ENCODE measurements at regions of chr14 and their contacts with region 1.

Region 1: DNA sequence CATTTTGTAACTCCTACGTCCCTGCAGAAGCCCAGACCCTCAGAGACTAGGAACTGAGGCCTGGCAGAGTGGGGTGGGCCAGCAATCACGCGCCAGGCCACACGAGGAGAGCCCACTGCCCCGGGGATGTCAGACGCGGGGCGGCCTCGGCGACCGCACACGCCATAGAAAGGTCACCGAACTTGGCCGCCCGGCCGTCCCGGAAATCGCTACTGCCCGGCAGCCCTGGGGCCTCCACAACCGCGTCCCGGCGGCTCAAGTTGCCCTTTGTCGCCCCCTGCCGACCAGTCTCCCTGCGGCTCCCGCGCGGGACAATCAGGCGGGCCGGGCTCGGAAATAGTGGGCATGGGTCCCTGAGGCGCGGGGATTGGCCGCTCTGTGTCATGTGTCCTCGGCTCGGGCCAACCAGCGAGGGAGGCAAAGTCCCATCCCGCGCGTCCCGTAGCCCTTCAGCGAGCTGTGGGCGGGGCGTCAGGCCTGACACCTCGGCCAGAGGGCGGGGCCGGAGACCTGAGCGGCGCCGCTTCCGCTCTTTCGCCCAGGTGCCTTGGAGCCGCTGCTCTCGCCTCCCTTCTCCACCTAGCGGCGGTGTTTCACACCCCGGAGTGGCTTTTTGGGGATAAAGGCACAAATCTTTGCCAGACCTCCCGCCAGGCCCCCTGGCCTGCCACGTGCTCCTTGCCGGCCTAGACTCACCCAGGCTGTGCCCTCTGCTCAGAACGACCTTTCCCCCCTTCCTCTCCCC is 33.4 kb upstream of the DEGS2 start:
- DNase-seq: peak; percentile 98 to 100 (median 99)
- ATAC-seq: peak; percentile 99
- H3K4me3 ChIP-seq: peak overlapping the region; percentile 56
- H3K4me3 Mint-ChIP-seq: peak overlapping the region; percentile 25 to 80 (median 60)
- H3K27ac ChIP-seq: peak overlapping the region; percentile 74
- H3K27ac Mint-ChIP-seq: peak overlapping the region; percentile 84 to 95 (median 93)
- H3K4me1 ChIP-seq: peaks cover 6 to 13% of the 10 kb centered on the region in 2 donors
- H3K4me1 Mint-ChIP-seq: peaks cover 5 to 18% (median 15%) of the 10 kb centered on the region in 7 donors
- H3K27me3 ChIP-seq: no peaks in the 10 kb centered on the region
- H3K27me3 Mint-ChIP-seq: no peaks in the 10 kb centered on the region

Region 2: DNA sequence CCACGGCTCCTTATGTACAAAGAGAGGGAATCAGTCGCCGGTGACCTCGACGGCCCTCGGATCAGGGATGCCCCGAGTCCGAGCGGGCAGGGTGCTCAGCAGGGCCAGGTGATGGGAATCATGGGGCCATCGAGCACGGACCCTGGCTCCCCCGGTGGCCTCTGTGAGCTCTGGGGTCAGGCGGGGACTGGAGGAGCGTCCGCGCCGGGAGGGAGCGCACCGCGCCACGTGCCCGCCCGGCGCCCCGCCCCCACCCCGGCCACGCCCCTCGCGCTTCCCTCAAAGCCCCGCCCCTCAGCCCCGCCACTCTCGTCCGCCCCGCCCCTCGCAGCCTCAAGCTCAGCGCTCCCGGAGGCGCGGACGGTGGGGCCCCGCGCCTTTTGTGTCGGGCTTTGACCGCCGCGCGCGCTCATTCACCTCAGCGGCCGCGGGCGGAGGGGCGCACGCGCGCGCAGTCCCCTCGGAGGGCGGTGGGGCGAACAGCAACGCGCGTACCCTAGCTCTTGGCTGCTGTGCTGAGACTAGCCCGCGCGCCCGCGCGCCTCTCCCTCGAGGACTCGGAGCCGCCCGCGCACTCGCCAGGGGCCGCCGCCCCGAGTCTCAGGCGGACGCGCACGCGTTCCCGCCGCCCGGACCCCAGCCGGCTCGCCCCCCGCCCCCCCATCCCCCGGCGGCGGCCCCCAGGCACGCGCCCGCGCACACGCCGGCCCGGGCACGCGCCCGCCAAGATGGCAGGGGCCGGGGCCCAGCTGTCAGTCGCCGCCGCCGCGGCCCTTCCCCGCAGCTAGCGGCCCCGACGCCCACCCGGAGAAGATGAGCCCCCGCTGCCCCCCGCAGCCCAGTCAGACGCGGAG is 221.5 kb before region 1 on chr14:
- CTCF ChIA-PET with region 1: interaction called, 4 read pairs
- POLR2A ChIA-PET with region 1: no interaction called
- intact Hi-C with region 1: loop called in 1 of 2 experiments (anchors 1 kb)
- DNase-seq: peak; percentile 69 to 87 (median 81)
- ATAC-seq: peak; percentile 95
- H3K4me3 ChIP-seq: peak overlapping the region; percentile 53
- H3K4me3 Mint-ChIP-seq: peak overlapping the region; percentile 43 to 93 (median 76)
- H3K27ac ChIP-seq: peak overlapping the region; percentile 58
- H3K27ac Mint-ChIP-seq: peak overlapping the region in 4 of 9 donors; percentile 21 to 87 (median 48)
- H3K4me1 ChIP-seq: no peaks in the 10 kb centered on the region
- H3K4me1 Mint-ChIP-seq: peaks cover 7 to 21% (median 15%) of the 10 kb centered on the region in 7 donors
- H3K27me3 ChIP-seq: no peaks in the 10 kb centered on the region
- H3K27me3 Mint-ChIP-seq: peaks cover 0 to 33% (median 7%) of the 10 kb centered on the region in 5 donors

Region 3: GRCh38 chr14:100108042-100108825 is 84.6 kb before region 1 on chr14:
- CTCF ChIA-PET with region 1: interaction called, 12 read pairs
- POLR2A ChIA-PET with region 1: no interaction called
- intact Hi-C with region 1: loop called in 1 of 2 experiments (anchors 1 kb)
- DNase-seq: peak; percentile 76 to 88 (median 84)
- ATAC-seq: peak; percentile 80
- H3K4me3 ChIP-seq: no peak overlapping the region
- H3K4me3 Mint-ChIP-seq: peak overlapping the region; percentile 13 to 93 (median 64)
- H3K27ac ChIP-seq: peak overlapping the region; percentile 83
- H3K27ac Mint-ChIP-seq: peak overlapping the region; percentile 89 to 98 (median 96)
- H3K4me1 ChIP-seq: peaks cover 49 to 74% of the 10 kb centered on the region in 2 donors
- H3K4me1 Mint-ChIP-seq: peaks cover 72 to 91% (median 82%) of the 10 kb centered on the region in 7 donors
- H3K27me3 ChIP-seq: no peaks in the 10 kb centered on the region
- H3K27me3 Mint-ChIP-seq: no peaks in the 10 kb centered on the region

Region 4: DNA sequence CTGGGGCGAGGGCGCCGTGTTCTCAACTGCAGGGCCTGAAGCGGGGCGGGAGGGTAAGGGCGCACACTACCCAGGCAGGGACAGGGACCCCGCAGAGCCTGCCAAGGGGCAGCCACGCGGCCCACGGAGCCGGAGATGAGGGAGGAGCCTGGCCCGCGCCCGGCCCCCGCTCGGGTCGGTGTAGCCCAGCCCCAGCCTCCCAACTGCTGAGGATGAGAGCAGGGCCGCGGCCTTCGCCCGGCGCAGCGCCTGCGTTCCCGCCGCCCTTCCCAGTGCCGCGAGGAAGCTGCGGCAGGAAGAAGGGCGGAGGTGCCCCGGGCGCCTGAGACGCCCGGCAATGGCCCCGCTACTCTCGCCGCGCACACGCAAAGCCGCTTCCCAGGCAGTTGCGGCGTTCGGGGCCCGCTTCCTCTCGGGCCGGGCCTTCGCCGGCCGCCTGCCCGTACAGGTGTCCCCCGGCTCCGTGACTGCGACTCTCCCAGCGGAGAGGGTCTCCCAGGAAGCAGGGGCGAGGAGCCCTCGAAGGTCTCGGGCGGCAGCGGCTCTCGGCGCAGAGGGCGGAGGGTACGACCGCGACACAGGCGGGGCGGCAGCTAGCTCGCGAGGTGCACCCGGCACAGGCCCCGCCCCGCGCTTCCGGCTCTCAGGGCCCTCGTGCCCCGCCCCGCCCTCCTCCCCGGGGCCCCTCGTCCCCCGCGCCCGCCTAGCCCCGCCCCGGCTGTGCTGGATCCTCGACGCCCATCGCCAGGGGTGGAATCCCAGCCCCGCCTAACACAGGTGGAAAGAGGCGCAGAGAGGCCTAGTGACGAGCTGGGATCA is 21.3 kb after region 1 on chr14:
- CTCF ChIA-PET with region 1: interaction called, 7 read pairs
- POLR2A ChIA-PET with region 1: interaction called, 24 read pairs
- intact Hi-C with region 1: loop called (anchors 1 kb)
- DNase-seq: peak; percentile 82 to 95 (median 90)
- ATAC-seq: peak; percentile 98
- H3K4me3 ChIP-seq: peak overlapping the region; percentile 90
- H3K4me3 Mint-ChIP-seq: peak overlapping the region; percentile 76 to 89 (median 85)
- H3K27ac ChIP-seq: peak overlapping the region; percentile 97
- H3K27ac Mint-ChIP-seq: peak overlapping the region; percentile 62 to 94 (median 92)
- H3K4me1 ChIP-seq: peaks cover 12 to 19% of the 10 kb centered on the region in 2 donors
- H3K4me1 Mint-ChIP-seq: peaks cover 10 to 39% (median 34%) of the 10 kb centered on the region in 7 donors
- H3K27me3 ChIP-seq: no peaks in the 10 kb centered on the region
- H3K27me3 Mint-ChIP-seq: no peaks in the 10 kb centered on the region

Region 5: DNA sequence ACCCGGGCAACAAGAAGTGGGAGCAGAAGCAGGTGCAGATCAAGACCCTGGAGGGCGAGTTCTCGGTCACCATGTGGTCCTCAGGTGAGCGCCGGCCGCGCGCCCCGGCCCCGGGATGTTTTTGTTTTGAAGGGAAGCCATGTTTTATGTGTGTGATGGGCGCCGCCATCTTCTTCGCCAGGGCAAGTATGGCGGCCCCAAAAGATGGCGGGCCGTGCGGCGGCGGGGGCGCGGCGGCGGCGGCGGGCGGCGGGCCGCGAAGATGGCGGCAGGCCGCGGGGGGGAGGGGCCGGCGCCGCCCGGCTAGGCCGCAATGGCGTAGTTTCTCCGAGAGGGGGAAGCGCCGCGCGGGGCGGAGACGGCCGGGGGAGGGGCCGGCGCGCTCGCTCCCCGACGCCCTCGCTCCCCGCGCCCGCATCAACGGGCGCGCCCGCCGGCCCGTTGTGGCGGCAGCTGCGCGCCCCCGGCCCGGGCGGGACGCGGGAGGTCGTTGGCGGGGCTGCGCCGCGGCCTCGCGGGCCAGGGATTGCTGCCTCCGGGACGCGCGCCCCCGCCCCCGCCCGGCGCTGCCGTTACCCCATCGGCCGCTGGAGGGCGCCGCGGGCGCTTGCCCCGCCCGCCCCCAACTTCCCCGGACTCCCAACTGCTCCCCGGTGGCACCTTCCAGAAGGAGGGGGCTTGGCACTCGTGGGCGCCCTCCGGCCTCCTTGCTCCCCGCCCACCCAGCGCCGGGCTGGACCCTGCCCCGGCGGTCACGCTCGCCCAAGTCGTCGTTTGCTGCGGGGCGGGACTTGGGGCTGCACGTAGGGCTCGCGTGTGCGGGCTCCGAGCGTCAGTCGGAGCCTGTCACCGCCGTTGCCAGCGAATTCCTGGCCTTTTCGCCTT is 47.2 kb after region 1 on chr14:
- CTCF ChIA-PET with region 1: interaction called, 12 read pairs
- POLR2A ChIA-PET with region 1: interaction called, 7 read pairs
- intact Hi-C with region 1: loop called (anchors 1 kb)
- DNase-seq: peak; percentile 81 to 91 (median 88)
- ATAC-seq: peak; percentile 65
- H3K4me3 ChIP-seq: peak overlapping the region; percentile 85
- H3K4me3 Mint-ChIP-seq: peak overlapping the region; percentile 88 to 100 (median 94)
- H3K27ac ChIP-seq: peak overlapping the region; percentile 98
- H3K27ac Mint-ChIP-seq: peak overlapping the region; percentile 85 to 99 (median 96)
- H3K4me1 ChIP-seq: peaks cover 35 to 43% of the 10 kb centered on the region in 2 donors
- H3K4me1 Mint-ChIP-seq: peaks cover 41 to 69% (median 53%) of the 10 kb centered on the region in 7 donors
- H3K27me3 ChIP-seq: no peaks in the 10 kb centered on the region
- H3K27me3 Mint-ChIP-seq: peaks cover 0 to 2% (median 0%) of the 10 kb centered on the region in 5 donors

Region 6: GRCh38 chr14:100294213-100294962 is 101.5 kb after region 1 on chr14:
- CTCF ChIA-PET with region 1: no interaction called
- POLR2A ChIA-PET with region 1: no interaction called
- intact Hi-C with region 1: no loop called
- DNase-seq: no peak
- ATAC-seq: no peak
- H3K4me3 ChIP-seq: no peak overlapping the region
- H3K4me3 Mint-ChIP-seq: no peak overlapping the region
- H3K27ac ChIP-seq: no peak overlapping the region
- H3K27ac Mint-ChIP-seq: peak overlapping the region in 1 of 9 donors; percentile 65
- H3K4me1 ChIP-seq: no peaks in the 10 kb centered on the region
- H3K4me1 Mint-ChIP-seq: peaks cover 0 to 8% (median 0%) of the 10 kb centered on the region in 7 donors
- H3K27me3 ChIP-seq: no peaks in the 10 kb centered on the region
- H3K27me3 Mint-ChIP-seq: no peaks in the 10 kb centered on the region

Region 7: DNA sequence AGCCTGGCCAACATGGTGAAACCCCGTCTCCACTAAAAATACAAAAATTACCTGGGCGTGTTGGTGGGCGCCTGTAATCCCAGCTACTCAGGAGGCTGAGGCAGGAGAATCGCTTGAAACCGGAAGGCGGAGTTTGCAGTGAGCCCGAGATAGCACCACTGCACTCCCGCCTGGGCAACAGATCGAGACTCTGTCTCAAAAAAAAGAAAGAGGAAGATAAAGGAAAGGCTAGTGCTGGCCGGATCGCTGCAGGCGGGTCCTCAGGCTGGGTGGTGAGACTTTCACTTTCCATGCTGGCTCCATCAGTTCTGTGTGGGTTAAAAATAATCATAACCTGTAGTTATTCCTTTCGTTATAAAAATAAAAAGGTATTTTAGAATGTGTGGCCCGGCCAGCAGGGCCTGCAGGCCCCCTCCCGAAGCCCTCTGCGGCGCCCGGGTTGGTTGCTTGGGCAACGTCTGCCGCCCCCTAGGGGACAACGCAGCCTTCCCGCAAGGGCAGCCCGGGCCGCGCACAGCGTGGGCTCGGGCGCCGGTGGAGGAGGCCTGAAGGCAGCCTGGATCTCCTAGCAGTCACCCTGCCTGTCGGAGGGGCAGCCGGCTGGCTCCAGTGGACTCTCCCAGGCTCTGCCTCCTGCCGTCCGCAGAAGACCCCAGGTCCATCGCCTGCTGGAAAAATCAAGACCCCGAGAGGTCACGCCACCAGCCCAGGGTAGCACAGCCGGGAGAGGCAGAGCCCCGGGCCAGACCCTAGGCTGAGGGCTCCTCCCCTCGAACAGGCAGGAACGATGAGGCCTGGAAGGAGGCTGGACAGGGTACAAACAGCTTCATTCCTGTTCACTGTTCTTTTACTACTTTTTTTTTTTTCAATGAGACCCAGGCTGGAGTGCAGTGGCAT is 125.3 kb after region 1 on chr14:
- CTCF ChIA-PET with region 1: no interaction called
- POLR2A ChIA-PET with region 1: no interaction called
- intact Hi-C with region 1: loop called in 1 of 2 experiments (anchors 1 kb)
- DNase-seq: peak; percentile 38 to 72 (median 58)
- ATAC-seq: peak; percentile 97
- H3K4me3 ChIP-seq: peak overlapping the region; percentile 53
- H3K4me3 Mint-ChIP-seq: peak overlapping the region; percentile 45 to 79 (median 72)
- H3K27ac ChIP-seq: no peak overlapping the region
- H3K27ac Mint-ChIP-seq: peak overlapping the region in 1 of 9 donors; percentile 9
- H3K4me1 ChIP-seq: no peaks in the 10 kb centered on the region
- H3K4me1 Mint-ChIP-seq: peaks cover 4 to 7% (median 5%) of the 10 kb centered on the region in 7 donors
- H3K27me3 ChIP-seq: no peaks in the 10 kb centered on the region
- H3K27me3 Mint-ChIP-seq: peaks cover 0 to 5% (median 0%) of the 10 kb centered on the region in 5 donors

Region 8: GRCh38 chr14:100476012-100476822 is 283.4 kb after region 1 on chr14:
- CTCF ChIA-PET with region 1: no interaction called
- POLR2A ChIA-PET with region 1: no interaction called
- intact Hi-C with region 1: no loop called
- DNase-seq: no peak
- ATAC-seq: no peak
- H3K4me3 ChIP-seq: no peak overlapping the region
- H3K4me3 Mint-ChIP-seq: no peak overlapping the region
- H3K27ac ChIP-seq: no peak overlapping the region
- H3K27ac Mint-ChIP-seq: no peak overlapping the region
- H3K4me1 ChIP-seq: no peaks in the 10 kb centered on the region
- H3K4me1 Mint-ChIP-seq: peaks cover 0 to 9% (median 0%) of the 10 kb centered on the region in 7 donors
- H3K27me3 ChIP-seq: no peaks in the 10 kb centered on the region
- H3K27me3 Mint-ChIP-seq: no peaks in the 10 kb centered on the region